ENCODE measurements at regions of chr15 and their contacts with region 1.

Region 1: GRCh38 chr15:83011271-83012075 is at the start of gene C15orf40:
- DNase-seq: peak; percentile 96
- H3K4me3 ChIP-seq: peak within 1 kb of the TSS; percentile 93
- H3K27ac ChIP-seq: peak within 1 kb of the TSS; percentile 74
- H3K4me1 ChIP-seq: peaks cover 23% of the 10 kb centered on the region
- CTCF ChIP-seq: peak; percentile 77
- total RNA-seq, gene C15orf40: 29.9 and 33.8 TPM in 2 replicates

Region 2: GRCh38 chr15:83066734-83067637 is 55.5 kb after region 1 on chr15 and contains the start of gene BTBD1:
- CTCF ChIA-PET with region 1: interaction called, 6 read pairs
- POLR2A ChIA-PET with region 1: interaction called, 3 read pairs
- intact Hi-C with region 1: loop called (anchors 1 kb)
- DNase-seq: peak; percentile 95
- H3K4me3 ChIP-seq: peak within 1 kb of the TSS; percentile 80
- H3K27ac ChIP-seq: peak within 1 kb of the TSS; percentile 82
- H3K4me1 ChIP-seq: peaks cover 44% of the 10 kb centered on the region
- CTCF ChIP-seq: peak; percentile 5; the same call in 1 of the 2 replicates
- total RNA-seq, gene BTBD1: 95.4 and 99.5 TPM in 2 replicates

Region 3: DNA sequence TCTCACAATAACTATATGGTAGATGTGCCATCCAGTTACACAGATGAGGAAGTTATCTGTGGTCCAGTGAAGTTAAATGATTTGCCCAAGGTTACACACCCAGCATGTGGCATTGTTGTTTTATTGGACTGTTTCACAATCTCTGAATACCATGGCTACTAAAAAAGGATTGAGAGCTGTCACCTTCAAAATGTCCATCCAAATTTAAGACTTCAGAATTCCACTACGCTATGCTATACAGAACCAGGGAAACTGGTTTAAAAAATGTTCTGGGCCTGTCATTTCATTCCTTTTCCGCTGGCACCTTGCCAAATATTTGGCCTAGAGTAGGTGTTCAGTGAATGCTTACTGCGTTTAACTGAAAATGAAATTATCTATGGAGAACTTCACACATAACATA is 116.2 kb after region 1 on chr15:
- CTCF ChIA-PET with region 1: no interaction called
- POLR2A ChIA-PET with region 1: no interaction called
- intact Hi-C with region 1: no loop called
- DNase-seq: no peak
- H3K4me3 ChIP-seq: no peak overlapping the region
- H3K27ac ChIP-seq: no peak overlapping the region
- H3K4me1 ChIP-seq: no peaks in the 10 kb centered on the region
- CTCF ChIP-seq: no peak